ENCODE measurements at regions of chr2 and their contacts with region 1.

Region 1: GRCh38 chr2:20212459-20212870 is 12.5 kb downstream of the SDC1 start:
- DNase-seq: peak; percentile 96
- H3K4me3 ChIP-seq: peak overlapping the region in 2 of 3 experiments; percentile 13 to 19
- H3K27ac ChIP-seq: peak overlapping the region; percentile 90
- H3K4me1 ChIP-seq: peaks cover 100% of the 10 kb centered on the region
- H3K27me3 ChIP-seq: no peaks in the 10 kb centered on the region
- CTCF ChIP-seq: no peak

Region 2: GRCh38 chr2:19879120-19879519 is 333.3 kb before region 1 on chr2:
- CTCF ChIA-PET with region 1: no interaction called
- dilution Hi-C with region 1: no loop called
- in situ Hi-C with region 1: no loop called
- intact Hi-C with region 1: no loop called
- DNase-seq: no peak
- H3K4me3 ChIP-seq: no peak overlapping the region
- H3K27ac ChIP-seq: no peak overlapping the region
- H3K4me1 ChIP-seq: no peaks in the 10 kb centered on the region
- H3K27me3 ChIP-seq: no peaks in the 10 kb centered on the region
- CTCF ChIP-seq: no peak

Region 3: GRCh38 chr2:20291106-20291564 is 78.7 kb after region 1 on chr2:
- CTCF ChIA-PET with region 1: interaction called, 4 read pairs
- dilution Hi-C with region 1: no loop called
- in situ Hi-C with region 1: no loop called
- intact Hi-C with region 1: loop called (anchors 1 kb)
- DNase-seq: peak; percentile 80
- H3K4me3 ChIP-seq: no peak overlapping the region
- H3K27ac ChIP-seq: peak overlapping the region; percentile 27
- H3K4me1 ChIP-seq: peaks cover 19% of the 10 kb centered on the region
- H3K27me3 ChIP-seq: no peaks in the 10 kb centered on the region
- CTCF ChIP-seq: peak; percentile 79 to 82

Region 4: DNA sequence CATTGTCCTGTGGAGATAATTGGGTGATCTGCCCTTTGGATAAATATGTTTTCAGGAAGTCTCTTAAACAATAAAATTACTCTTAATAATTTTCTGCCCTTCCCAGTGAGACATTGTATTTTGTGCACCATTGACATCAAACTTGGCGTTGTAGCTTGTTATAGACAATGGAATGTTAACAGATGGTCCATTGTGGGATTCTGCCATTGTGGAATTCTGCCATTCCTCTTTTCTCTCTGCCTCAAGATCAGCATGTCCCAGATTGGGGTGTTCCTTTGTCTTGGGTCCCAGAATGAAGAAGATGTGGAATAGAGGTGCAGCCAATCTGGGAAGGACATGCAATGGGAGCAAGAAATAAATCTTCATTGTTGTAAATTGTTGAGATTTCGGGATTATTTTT is 625.6 kb after region 1 on chr2:
- CTCF ChIA-PET with region 1: no interaction called
- dilution Hi-C with region 1: no loop called
- in situ Hi-C with region 1: no loop called
- intact Hi-C with region 1: no loop called
- DNase-seq: no peak
- H3K4me3 ChIP-seq: no peak overlapping the region
- H3K27ac ChIP-seq: no peak overlapping the region
- H3K4me1 ChIP-seq: no peaks in the 10 kb centered on the region
- H3K27me3 ChIP-seq: no peaks in the 10 kb centered on the region
- CTCF ChIP-seq: no peak

Measured in mammary epithelial cell (primary cell).